ENCODE measurements at regions of chr4 and their contacts with region 1.

Region 1: DNA sequence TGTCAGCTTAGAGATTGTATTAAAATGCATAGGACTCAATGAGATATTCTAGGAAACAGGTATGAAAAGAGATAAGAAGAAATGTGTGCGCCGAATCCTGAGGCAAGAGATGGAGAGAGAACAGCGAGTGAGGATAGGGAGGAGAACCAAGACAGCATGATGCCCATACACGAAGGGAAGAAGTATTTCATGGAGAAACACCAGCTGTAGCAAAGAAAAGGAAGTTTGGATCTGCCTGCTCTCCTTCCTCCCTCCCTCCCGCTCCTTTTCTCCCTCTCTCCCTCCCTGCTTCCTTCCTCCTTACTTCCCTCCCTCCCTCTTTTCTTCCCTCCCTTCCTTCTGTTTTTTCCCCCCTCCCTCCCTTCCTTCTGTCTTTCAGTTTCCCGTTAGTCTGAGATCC is 318.6 kb upstream of the TAPT1 start:
- DNase-seq: no peak
- H3K4me3 ChIP-seq: no peak overlapping the region
- H3K27ac ChIP-seq: no peak overlapping the region
- H3K4me1 ChIP-seq: no peaks in the 10 kb centered on the region
- H3K27me3 ChIP-seq: no peaks in the 10 kb centered on the region
- CTCF ChIP-seq: no peak
- EP300 ChIP-seq: no peak
- POLR2A ChIP-seq: no peak
- RAD21 ChIP-seq: no peak

Region 2: DNA sequence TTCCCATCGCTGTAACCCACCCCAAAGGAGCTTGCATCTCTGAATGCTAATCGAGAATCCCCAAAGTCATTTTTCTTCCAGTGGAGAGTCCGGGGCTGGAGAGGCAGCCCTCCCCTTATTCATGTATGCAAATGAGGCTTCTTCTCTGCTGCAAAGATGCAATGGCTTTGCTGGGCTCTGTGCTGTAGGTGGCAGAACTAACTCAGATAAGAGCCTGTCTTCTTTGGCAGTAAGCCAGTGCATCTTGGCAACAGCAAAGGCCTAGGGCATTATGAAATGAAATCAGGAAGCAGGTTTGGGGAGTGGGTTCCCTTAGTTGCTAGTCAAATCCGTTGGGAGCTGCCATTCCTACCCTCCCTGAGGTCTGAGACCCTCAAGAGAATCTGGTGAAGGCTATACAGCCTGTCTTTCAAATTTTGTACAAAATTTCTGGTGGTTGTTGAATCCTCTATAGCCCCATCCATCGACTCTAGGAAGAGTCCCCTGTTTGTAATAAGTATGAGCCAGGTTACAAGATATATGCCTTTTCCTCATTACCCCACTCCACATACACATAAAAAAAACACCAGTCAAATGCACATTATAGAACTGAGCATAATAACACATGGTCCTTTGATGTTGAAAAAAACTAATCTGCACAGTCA is 28.0 kb before region 1 on chr4:
- CTCF ChIA-PET with region 1: no interaction called
- POLR2A ChIA-PET with region 1: no interaction called
- DNase-seq: peak in 1 of 2 experiments; percentile 13
- H3K4me3 ChIP-seq: no peak overlapping the region
- H3K27ac ChIP-seq: no peak overlapping the region
- H3K4me1 ChIP-seq: no peaks in the 10 kb centered on the region
- H3K27me3 ChIP-seq: no peaks in the 10 kb centered on the region
- CTCF ChIP-seq: peak in 2 of 3 experiments; percentile 38 to 53; a peak in 3 of 4 replicates
- EP300 ChIP-seq: no peak
- POLR2A ChIP-seq: no peak
- RAD21 ChIP-seq: peak; percentile 66 to 69

Region 3: GRCh38 chr4:16532240-16532970 is 12.5 kb before region 1 on chr4:
- CTCF ChIA-PET with region 1: interaction called, 13 read pairs
- POLR2A ChIA-PET with region 1: no interaction called
- DNase-seq: no peak
- H3K4me3 ChIP-seq: no peak overlapping the region
- H3K27ac ChIP-seq: no peak overlapping the region
- H3K4me1 ChIP-seq: no peaks in the 10 kb centered on the region
- H3K27me3 ChIP-seq: no peaks in the 10 kb centered on the region
- CTCF ChIP-seq: no peak
- EP300 ChIP-seq: no peak
- POLR2A ChIP-seq: no peak
- RAD21 ChIP-seq: no peak

Region 4: DNA sequence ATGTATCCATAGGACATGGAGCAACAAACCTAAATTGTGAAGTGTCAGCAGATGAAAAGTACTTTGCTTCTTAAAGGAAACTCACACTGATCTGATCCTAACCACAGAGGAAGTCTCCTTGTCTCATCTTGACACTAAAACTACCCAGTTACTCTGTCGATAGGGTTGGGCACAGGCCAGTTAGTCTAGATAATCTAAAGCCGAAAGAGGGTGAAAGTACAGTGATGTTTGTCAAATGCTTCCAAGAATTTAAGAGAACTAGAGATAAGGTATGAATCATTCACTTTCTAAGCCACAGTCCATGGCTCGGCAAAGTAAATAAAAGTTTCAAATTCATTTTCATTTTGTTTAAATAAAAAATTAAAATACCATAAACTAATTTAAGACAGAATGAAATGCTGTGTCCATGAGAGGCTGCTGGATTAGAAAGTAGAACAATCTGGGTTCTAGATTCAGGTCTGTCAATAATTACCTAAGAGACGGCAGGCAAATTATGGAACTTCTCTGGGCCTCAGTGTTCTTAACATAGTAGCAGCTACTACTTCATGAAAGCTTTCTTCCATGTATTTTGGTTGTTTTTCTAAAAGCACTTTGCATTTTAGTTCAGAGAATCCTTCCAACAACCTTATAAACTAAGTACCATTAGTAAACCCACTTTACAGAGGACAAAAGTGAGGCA is 176.9 kb after region 1 on chr4:
- CTCF ChIA-PET with region 1: no interaction called
- POLR2A ChIA-PET with region 1: no interaction called
- DNase-seq: no peak
- H3K4me3 ChIP-seq: no peak overlapping the region
- H3K27ac ChIP-seq: no peak overlapping the region
- H3K4me1 ChIP-seq: no peaks in the 10 kb centered on the region
- H3K27me3 ChIP-seq: no peaks in the 10 kb centered on the region
- CTCF ChIP-seq: no peak
- EP300 ChIP-seq: no peak
- POLR2A ChIP-seq: no peak
- RAD21 ChIP-seq: no peak